ENCODE measurements at regions of chr6 and their contacts with region 1.

Region 1: GRCh38 chr6:52647199-52647598 is 23.7 kb upstream of the TMEM14A start:
- DNase-seq: no peak
- ATAC-seq: peak; percentile 46
- H3K4me3 Mint-ChIP-seq: no peak overlapping the region
- H3K27ac Mint-ChIP-seq: peak overlapping the region; percentile 53
- H3K4me1 Mint-ChIP-seq: peaks cover 17% of the 10 kb centered on the region
- H3K27me3 Mint-ChIP-seq: peaks cover 5% of the 10 kb centered on the region

Region 2: DNA sequence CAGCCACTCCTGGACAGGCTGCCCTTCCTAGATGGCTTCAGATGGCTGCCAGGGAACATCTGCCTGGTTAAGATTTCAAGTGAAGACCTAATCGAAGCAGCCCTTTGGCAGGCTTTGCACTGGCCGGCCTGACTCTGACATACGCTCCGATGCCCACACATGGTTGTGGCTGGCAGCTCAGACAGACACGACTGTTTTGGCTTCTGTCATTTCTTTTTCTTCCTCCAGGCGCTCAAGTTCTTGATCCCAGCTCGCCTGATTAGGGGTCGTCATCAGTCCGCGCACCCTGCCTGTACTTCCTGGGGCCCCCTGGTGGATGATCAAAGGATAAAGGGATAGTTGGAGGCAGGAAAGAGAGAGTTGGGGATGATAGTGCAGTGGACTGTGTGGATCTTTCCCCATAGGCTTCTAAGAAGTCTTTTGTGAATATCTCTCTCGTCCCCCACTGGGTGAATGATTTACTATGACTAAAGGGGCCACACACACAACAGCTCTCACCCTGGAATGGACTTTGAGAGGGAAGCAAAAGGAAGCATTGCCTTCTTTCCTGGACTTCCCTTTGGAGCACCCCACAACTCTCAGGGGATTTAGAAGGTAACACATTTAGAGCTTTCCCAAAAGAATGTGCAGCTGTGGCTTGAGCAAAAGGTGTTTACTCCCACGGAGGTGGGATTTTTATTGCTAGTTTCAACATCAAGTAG is 48.9 kb before region 1 on chr6:
- CTCF ChIA-PET with region 1: interaction called, 12 read pairs
- POLR2A ChIA-PET with region 1: no interaction called
- intact Hi-C with region 1: no loop called
- DNase-seq: peak; percentile 59
- ATAC-seq: peak; percentile 63
- H3K4me3 Mint-ChIP-seq: no peak overlapping the region
- H3K27ac Mint-ChIP-seq: no peak overlapping the region
- H3K4me1 Mint-ChIP-seq: peaks cover 16% of the 10 kb centered on the region
- H3K27me3 Mint-ChIP-seq: peaks cover 5% of the 10 kb centered on the region

Region 3: GRCh38 chr6:52635049-52635577 is 12.1 kb before region 1 on chr6:
- CTCF ChIA-PET with region 1: interaction called, 36 read pairs
- POLR2A ChIA-PET with region 1: no interaction called
- intact Hi-C with region 1: no loop called
- DNase-seq: peak; percentile 62
- ATAC-seq: peak; percentile 93
- H3K4me3 Mint-ChIP-seq: peak overlapping the region; percentile 24
- H3K27ac Mint-ChIP-seq: peak overlapping the region; percentile 87
- H3K4me1 Mint-ChIP-seq: peaks cover 18% of the 10 kb centered on the region
- H3K27me3 Mint-ChIP-seq: peaks cover 6% of the 10 kb centered on the region

Region 4: DNA sequence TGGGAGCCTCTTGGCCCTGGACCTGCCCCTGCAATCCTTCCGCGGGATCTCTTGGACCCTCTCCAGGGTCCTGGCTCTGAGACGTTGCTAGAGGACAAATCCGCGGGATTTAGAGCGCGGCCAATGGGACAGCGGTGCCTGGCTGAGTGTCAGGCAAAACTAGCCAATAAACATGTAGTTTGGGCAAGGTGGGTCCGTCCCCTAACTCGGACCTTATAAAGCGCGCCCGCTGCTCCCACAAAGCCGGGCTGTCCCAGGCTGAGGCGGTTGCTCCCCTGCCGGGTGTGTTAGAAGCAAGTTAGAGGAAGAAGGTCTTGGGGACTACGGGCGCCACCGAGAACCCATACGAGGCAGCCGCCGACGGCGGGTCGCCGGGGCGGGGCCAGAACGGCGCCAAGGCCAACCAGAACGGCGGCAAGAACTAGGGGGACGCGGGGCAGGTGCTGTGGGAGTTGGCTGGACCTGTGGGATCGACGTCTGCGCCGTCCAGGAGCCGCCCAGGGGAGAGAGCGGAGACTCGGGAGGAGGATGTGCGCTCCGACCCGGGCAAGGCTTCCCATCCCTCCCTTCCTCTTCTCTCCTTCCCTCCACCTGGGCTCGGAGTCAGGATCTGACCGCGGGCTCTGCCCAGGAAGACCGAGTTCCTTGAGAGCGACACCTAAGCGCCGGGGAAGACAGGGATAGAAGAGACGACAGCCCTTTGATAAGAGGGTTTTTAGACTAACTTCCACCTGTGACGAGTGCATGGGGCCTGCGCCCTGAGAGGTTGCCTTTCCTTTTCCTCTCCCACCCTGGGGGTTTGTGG is 17.2 kb after region 1 on chr6:
- CTCF ChIA-PET with region 1: interaction called, 58 read pairs
- POLR2A ChIA-PET with region 1: no interaction called
- intact Hi-C with region 1: loop called (anchors 1 kb)
- DNase-seq: peak; percentile 86
- ATAC-seq: peak; percentile 99
- H3K4me3 Mint-ChIP-seq: no peak overlapping the region
- H3K27ac Mint-ChIP-seq: no peak overlapping the region
- H3K4me1 Mint-ChIP-seq: peaks cover 11% of the 10 kb centered on the region
- H3K27me3 Mint-ChIP-seq: no peaks in the 10 kb centered on the region